ENCODE measurements at regions of chr2 and their contacts with region 1.

Region 1: DNA sequence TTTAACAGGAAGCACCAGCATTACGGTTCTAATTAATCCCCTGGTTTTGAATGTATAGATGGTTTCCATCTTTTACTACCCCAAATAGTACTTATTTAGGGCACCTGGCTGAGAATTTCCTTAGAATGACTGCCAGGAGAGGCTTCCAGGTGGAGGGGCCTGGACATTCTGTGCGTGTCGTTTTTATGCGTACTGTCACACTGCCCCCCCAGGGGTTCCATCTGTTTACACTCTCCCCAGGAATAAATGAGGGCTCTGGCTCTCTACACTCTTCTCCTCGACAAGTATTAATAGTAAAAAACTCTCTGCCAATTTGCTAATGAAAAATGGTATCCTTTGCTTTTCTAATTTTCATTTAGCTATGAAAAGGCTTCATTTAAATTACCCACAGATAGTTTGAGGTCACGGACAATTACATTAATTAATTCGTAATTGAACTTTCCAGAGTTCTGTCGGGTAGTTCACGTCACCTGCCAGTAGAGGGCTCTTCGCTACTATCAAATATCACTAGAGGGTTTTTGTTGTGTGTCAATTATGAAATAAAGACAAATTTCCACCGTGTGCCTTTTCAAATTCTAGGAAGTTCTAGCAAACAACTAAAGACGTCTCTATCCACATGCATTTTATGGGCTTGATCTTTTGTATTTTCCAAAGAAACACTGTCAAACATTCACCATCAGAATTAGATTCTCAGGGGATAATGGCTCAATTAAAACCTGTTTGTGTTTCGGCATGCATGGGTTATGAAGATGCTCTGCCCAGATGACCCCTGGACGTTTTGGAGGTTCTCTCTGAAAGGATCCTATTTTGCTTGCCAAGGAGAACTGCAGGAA is 88.8 kb upstream of the ASB18 start:
- DNase-seq: no peak
- H3K4me3 ChIP-seq: no peak overlapping the region
- H3K27ac ChIP-seq: no peak overlapping the region
- H3K4me1 ChIP-seq: no peaks in the 10 kb centered on the region
- H3K27me3 ChIP-seq: no peaks in the 10 kb centered on the region
- CTCF ChIP-seq: peak; percentile 72 to 84 (median 74)

Region 2: DNA sequence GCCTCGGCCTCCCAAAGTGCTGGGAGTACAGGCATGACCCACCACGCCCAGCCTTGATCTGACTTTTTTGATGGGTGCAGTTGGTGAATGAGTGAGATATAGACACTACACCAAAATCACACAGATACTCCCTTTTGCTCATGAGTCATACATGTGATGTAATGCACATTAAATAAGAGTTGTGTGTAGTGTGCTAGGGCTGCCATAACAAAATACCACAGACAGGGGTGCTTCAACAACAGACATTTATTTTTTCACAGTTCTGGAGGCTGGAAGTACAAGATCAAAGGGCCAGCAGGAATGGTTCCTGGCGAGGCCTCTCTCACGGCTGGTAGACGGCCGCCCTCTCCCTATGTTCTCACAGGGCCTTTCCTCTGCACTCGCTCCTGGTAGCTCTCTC is 231.4 kb before region 1 on chr2:
- intact Hi-C with region 1: no loop called
- DNase-seq: no peak
- H3K4me3 ChIP-seq: no peak overlapping the region
- H3K27ac ChIP-seq: no peak overlapping the region
- H3K4me1 ChIP-seq: no peaks in the 10 kb centered on the region
- H3K27me3 ChIP-seq: no peaks in the 10 kb centered on the region
- CTCF ChIP-seq: no peak

Region 3: DNA sequence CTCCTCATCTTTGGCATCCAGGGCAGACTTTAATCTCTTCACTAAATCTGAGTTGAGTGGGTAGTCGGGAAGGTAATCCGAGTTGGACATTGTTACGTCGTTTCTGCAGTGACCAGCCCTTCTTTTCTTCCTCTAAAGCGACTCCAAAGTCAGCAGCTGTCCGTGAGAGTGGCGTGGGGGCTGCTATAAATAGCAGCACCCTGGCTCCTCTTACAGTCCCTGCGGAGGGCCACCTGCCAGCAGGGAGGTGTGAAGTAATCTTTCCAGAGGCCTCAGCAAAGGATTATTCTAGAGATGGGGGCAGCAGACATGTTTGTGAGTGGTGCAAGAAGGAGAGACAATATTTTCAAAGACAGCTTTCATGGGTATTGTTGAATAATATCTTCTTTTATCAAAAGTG is 88.7 kb before region 1 on chr2 and contains the start of gene ASB18:
- intact Hi-C with region 1: no loop called
- DNase-seq: no peak
- H3K4me3 ChIP-seq: no peak within 1 kb of the TSS
- H3K27ac ChIP-seq: no peak within 1 kb of the TSS
- H3K4me1 ChIP-seq: no peaks in the 10 kb centered on the region
- H3K27me3 ChIP-seq: no peaks in the 10 kb centered on the region
- CTCF ChIP-seq: no peak
- total RNA-seq, gene ASB18: not detected

Region 4: GRCh38 chr2:236376566-236377244 is 23.7 kb after region 1 on chr2:
- intact Hi-C with region 1: no loop called
- DNase-seq: no peak
- H3K4me3 ChIP-seq: no peak overlapping the region
- H3K27ac ChIP-seq: no peak overlapping the region
- H3K4me1 ChIP-seq: no peaks in the 10 kb centered on the region
- H3K27me3 ChIP-seq: no peaks in the 10 kb centered on the region
- CTCF ChIP-seq: no peak

Region 5: GRCh38 chr2:236512902-236513435 is 160.0 kb after region 1 on chr2:
- intact Hi-C with region 1: loop called (anchors 2 kb)
- DNase-seq: peak in 1 of 2 donors; percentile 84
- H3K4me3 ChIP-seq: no peak overlapping the region
- H3K27ac ChIP-seq: no peak overlapping the region
- H3K4me1 ChIP-seq: no peaks in the 10 kb centered on the region
- H3K27me3 ChIP-seq: no peaks in the 10 kb centered on the region
- CTCF ChIP-seq: peak; percentile 71 to 85 (median 76)

Region 6: DNA sequence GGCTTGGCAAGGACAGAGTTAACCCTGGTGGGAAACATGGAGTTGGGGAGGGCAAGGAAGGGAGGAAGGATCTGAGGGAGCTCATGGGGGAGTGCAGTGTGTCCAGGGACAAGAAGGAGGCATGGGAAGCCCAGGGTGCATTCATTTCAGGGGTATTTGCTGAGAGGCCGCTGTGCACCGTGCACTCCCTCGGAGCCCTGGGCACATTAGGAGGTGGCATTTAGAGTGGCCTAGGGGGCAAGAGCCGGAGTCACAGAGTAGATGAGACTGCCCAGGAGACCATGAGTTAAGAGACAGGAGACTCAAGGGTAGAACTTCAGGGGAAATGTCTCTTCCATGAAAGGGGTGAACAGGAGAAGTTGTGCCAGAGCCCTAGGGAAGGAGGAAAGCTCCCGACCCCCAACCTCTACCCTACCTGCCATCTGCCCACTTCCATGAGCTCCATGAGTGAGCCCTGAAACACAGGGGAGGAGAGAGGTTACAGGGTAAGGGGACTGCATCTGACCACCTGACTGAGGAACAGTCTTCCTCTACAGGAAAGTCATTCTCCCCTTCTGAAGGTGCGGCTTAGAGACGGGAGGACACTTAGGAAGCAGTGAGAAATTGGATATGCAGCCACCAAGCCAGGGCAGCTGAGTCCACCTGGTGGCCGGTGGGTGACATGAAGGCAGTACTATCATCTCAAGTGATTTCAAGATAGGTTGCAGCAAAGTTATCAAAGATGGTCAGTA is 674.2 kb after region 1 on chr2:
- intact Hi-C with region 1: loop called (anchors 1 kb)
- DNase-seq: peak; percentile 38 to 83
- H3K4me3 ChIP-seq: no peak overlapping the region
- H3K27ac ChIP-seq: no peak overlapping the region
- H3K4me1 ChIP-seq: no peaks in the 10 kb centered on the region
- H3K27me3 ChIP-seq: no peaks in the 10 kb centered on the region
- CTCF ChIP-seq: peak; percentile 71 to 86 (median 80)

Region 7: DNA sequence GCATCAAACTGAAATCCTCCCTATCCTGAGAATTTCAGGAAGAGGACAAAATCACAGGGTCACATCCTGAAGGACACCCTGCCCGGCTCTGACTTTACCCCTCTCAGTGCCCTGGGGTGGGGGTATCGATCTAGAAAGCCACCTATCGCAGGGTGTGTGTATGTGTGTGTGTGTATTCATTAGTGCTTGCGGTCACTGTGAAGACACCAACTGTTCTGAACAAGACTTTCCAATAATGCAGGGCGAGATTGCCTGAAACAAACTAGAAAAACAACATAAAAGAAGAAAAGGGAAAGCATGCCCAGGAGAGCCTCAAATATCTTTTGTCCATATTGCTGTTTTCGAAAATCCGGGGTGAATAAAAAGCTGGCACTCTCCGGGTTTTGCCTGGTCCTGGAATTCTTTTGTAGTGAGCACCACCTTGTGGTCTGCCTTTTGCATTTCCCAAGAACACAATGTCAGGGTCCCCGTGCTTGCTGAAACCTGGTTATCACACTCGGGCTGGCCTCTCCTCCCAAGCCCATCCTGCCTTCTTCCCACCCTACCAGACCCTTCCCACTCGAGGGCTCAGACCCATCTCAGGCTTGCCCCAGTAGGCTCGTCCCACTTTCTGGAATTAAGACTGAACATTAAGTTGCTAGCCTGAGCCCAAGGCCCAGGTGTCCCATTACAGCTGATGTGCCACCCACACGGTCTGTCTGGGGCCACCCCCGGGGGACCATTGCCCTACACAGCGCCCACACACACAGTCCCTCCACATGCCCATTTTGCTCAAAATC is 707.7 kb after region 1 on chr2:
- intact Hi-C with region 1: loop called (anchors 1 kb)
- DNase-seq: no peak
- H3K4me3 ChIP-seq: peak overlapping the region in 1 of 2 donors; percentile 31
- H3K27ac ChIP-seq: no peak overlapping the region
- H3K4me1 ChIP-seq: peaks cover 0 to 15% of the 10 kb centered on the region in 2 donors
- H3K27me3 ChIP-seq: no peaks in the 10 kb centered on the region
- CTCF ChIP-seq: peak; percentile 61 to 74 (median 71)

Region 8: GRCh38 chr2:237072067-237072931 is 719.3 kb after region 1 on chr2:
- intact Hi-C with region 1: loop called (anchors 1 kb)
- DNase-seq: peak in 1 of 2 donors; percentile 88
- H3K4me3 ChIP-seq: no peak overlapping the region
- H3K27ac ChIP-seq: peak overlapping the region in 1 of 2 donors; percentile 70
- H3K4me1 ChIP-seq: peaks cover 0 to 13% of the 10 kb centered on the region in 2 donors
- H3K27me3 ChIP-seq: no peaks in the 10 kb centered on the region
- CTCF ChIP-seq: peak; percentile 84 to 97 (median 96)

Measured in ascending aorta (tissue), 2 donors.